PC-3 (cell line): ENCODE measurements at regions of chr9 and their contacts with region 1.

Region 1: GRCh38 chr9:110911659-110912418 is 126.4 kb downstream of the LPAR1 start:
- DNase-seq: peak; percentile 90
- ATAC-seq: peak; percentile 84
- H3K4me3 ChIP-seq: peak overlapping the region; percentile 23; the same call in 1 of the 2 replicates
- H3K27ac ChIP-seq: peak overlapping the region; percentile 100
- H3K4me1 ChIP-seq: peaks cover 47% of the 10 kb centered on the region
- H3K27me3 ChIP-seq: no peaks in the 10 kb centered on the region
- CTCF ChIP-seq: no peak

Region 2: DNA sequence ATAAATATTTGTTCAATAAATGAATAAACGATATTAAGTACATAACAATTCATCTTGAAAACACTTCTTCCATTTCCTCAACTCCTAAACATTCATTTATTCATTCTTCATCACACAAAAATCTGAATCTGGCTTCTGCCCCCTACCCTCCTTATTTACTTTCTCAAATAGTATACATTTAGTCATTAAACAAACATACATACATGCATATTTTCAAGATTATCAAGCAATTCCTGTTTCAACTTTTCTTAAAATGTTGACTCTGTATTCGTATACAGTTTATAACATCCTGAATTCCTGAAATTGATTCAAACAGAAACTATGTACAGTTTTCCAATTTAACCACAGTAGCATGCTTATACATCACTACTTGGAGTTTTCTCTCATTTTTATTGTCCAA is 114.2 kb before region 1 on chr9:
- CTCF ChIA-PET with region 1: no interaction called
- POLR2A ChIA-PET with region 1: interaction called, 3 read pairs
- intact Hi-C with region 1: loop called (anchors 5 kb)
- DNase-seq: peak; percentile 91
- ATAC-seq: peak; percentile 67
- H3K4me3 ChIP-seq: no peak overlapping the region; the same call in 1 of the 2 replicates
- H3K27ac ChIP-seq: peak overlapping the region; percentile 99
- H3K4me1 ChIP-seq: peaks cover 43% of the 10 kb centered on the region
- H3K27me3 ChIP-seq: no peaks in the 10 kb centered on the region
- CTCF ChIP-seq: no peak

Region 3: DNA sequence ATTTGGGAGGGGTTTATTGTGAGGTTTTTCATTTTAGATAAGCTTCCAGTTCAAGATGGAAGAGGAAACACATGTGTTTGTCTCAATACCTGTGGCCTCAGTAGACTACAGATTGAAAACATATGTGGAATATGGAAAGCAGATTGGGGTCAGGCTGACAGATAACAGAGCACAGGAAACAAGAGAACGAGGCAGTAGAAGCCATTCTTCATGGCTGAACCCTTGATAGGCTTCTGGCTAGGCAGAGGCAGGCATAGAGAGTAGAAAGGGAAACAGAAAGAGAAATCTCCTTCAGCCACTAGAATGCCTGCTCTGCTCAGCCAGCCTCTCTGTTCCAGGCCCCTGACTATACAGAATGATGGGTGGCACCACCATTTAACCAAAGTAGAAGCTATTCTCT is 90.8 kb before region 1 on chr9:
- CTCF ChIA-PET with region 1: no interaction called
- POLR2A ChIA-PET with region 1: no interaction called
- intact Hi-C with region 1: no loop called
- DNase-seq: no peak
- ATAC-seq: no peak
- H3K4me3 ChIP-seq: no peak overlapping the region
- H3K27ac ChIP-seq: no peak overlapping the region
- H3K4me1 ChIP-seq: peaks cover 4% of the 10 kb centered on the region; the same call in 1 of the 2 replicates
- H3K27me3 ChIP-seq: no peaks in the 10 kb centered on the region
- CTCF ChIP-seq: no peak

Region 4: DNA sequence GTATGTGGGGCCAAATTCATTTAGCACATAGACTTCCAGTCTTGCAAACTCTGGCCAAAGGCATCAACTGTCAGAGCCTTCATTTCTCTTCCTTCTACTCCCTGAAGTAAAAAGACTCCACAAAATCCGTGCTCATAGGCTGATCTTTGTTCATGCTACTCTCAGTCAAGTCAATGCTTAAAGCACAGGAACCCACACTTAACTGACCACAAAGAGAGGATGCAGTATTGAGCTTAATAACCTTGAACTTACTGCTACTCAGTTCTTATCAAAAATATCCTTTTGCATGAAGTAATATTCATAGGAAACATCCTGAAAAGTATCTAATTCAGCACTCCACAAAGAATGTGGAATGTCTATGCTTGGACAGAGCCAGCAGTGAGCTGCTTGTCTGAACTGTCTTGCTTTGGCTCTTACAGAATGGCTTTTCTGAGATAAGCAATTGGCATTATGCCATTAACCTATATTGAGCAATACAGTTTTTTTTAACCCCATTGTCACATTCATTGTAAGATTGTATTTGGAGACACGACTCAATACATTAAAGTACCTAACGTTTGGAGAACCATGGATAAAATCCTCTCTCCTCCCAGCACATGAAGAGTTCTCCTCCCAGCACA is 104.7 kb after region 1 on chr9:
- CTCF ChIA-PET with region 1: no interaction called
- POLR2A ChIA-PET with region 1: interaction called, 3 read pairs
- intact Hi-C with region 1: loop called (anchors 5 kb)
- DNase-seq: peak; percentile 42
- ATAC-seq: no peak
- H3K4me3 ChIP-seq: 0 out of 2 replicates have a peak overlapping the region, but pooled peaks have one; percentile 2
- H3K27ac ChIP-seq: peak overlapping the region; percentile 82
- H3K4me1 ChIP-seq: peaks cover 59% of the 10 kb centered on the region
- H3K27me3 ChIP-seq: no peaks in the 10 kb centered on the region
- CTCF ChIP-seq: no peak

Region 5: GRCh38 chr9:111037381-111038305 is 125.8 kb after region 1 on chr9:
- CTCF ChIA-PET with region 1: no interaction called
- POLR2A ChIA-PET with region 1: no interaction called
- intact Hi-C with region 1: loop called (anchors 5 kb)
- DNase-seq: peak; percentile 42
- ATAC-seq: peak; percentile 39
- H3K4me3 ChIP-seq: peak overlapping the region; percentile 83
- H3K27ac ChIP-seq: peak overlapping the region; percentile 66
- H3K4me1 ChIP-seq: peaks cover 37% of the 10 kb centered on the region
- H3K27me3 ChIP-seq: no peaks in the 10 kb centered on the region
- CTCF ChIP-seq: no peak